ENCODE measurements at regions of chr1 and their contacts with region 1.

Region 1: GRCh38 chr1:47997289-47998200 is at the start of gene TRABD2B:
- DNase-seq: peak; percentile 69 to 96
- H3K4me3 ChIP-seq: peak within 1 kb of the TSS; percentile 41
- CTCF ChIP-seq: peak in 1 of 3 donors; percentile 58
- POLR2A ChIP-seq: no peak
- total RNA-seq, gene TRABD2B: 0.63 to 3.1 (median 1.7) TPM

Region 2: GRCh38 chr1:48055876-48056764 is 58.6 kb after region 1 on chr1:
- intact Hi-C with region 1: loop called (anchors 5 kb)
- DNase-seq: no peak
- H3K4me3 ChIP-seq: no peak overlapping the region
- CTCF ChIP-seq: no peak
- POLR2A ChIP-seq: no peak

Region 3: DNA sequence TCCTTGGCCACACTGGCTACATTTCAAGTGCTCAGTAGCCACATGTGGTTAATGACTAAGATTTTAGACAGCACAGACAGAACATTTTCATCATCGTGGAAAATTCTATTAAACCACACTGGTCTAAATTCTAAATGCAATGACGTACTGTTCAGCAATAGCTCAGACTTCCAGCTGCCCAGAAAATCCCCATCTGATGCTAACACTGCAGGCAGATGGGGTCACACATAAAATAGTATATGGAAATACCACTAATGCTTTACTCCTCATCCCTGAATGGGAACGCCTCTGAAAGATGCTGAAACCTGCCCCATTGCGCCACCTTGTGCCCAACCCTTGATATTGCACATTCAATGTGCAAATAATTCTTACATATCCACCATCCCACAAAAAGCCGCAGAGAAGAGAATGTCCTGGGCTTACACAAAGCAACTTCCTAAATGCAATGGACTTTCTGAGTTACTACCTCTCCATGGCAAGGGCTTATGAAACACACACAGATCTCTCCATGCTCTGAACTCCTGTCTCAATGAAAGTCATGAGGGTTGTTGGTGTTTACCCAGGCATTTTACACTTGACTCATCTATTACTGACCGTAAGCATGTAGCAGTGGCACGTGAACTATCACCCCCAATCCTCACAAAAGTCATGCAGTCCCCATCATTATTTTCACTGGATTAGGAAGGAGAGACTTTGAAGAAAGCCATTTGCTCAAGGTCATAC is 204.6 kb after region 1 on chr1:
- intact Hi-C with region 1: loop called (anchors 10 kb)
- DNase-seq: peak; percentile 70 to 91
- H3K4me3 ChIP-seq: no peak overlapping the region
- CTCF ChIP-seq: peak in 1 of 3 donors; percentile 33
- POLR2A ChIP-seq: no peak

Region 4: GRCh38 chr1:48294656-48295055 is 297.1 kb after region 1 on chr1:
- intact Hi-C with region 1: no loop called
- DNase-seq: no peak
- H3K4me3 ChIP-seq: no peak overlapping the region
- CTCF ChIP-seq: no peak
- POLR2A ChIP-seq: no peak

Region 5: GRCh38 chr1:49197081-49197480 is 1199.5 kb after region 1 on chr1:
- intact Hi-C with region 1: no loop called
- DNase-seq: no peak
- H3K4me3 ChIP-seq: no peak overlapping the region
- CTCF ChIP-seq: no peak
- POLR2A ChIP-seq: no peak